ENCODE measurements at regions of chr9 and their contacts with region 1.

Region 1: GRCh38 chr9:27561685-27562084 is 11.6 kb downstream of the C9orf72 start:
- DNase-seq: no peak
- H3K4me3 ChIP-seq: no peak overlapping the region
- H3K27ac ChIP-seq: no peak overlapping the region
- H3K4me1 ChIP-seq: no peaks in the 10 kb centered on the region; a peak in 1 of 4 replicates
- H3K27me3 ChIP-seq: no peaks in the 10 kb centered on the region
- CTCF ChIP-seq: no peak
- EP300 ChIP-seq: no peak
- RAD21 ChIP-seq: no peak

Region 2: DNA sequence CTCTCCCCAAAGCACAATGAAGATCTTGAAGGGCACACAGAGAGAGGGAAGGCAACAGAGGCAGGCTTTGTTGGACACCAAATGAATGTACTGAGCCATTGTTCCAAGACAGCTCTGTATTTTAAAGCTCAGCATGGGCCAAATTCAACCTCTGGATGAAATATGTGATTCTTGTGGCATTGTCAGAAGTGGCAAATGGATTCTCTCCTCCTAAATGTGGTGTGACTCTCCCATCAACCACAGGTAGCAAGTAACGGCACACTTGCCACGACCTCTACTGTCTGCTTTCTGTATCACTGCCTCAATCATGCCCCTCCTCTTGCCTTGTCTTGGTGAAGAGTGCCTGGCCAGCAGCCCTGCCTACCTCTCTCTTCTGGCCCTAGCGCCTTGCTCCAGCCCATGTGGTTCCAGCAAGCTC is 26.0 kb before region 1 on chr9:
- CTCF ChIA-PET with region 1: no interaction called
- POLR2A ChIA-PET with region 1: no interaction called
- DNase-seq: no peak
- H3K4me3 ChIP-seq: no peak overlapping the region
- H3K27ac ChIP-seq: no peak overlapping the region
- H3K4me1 ChIP-seq: no peaks in the 10 kb centered on the region; a peak in 1 of 4 replicates
- H3K27me3 ChIP-seq: no peaks in the 10 kb centered on the region
- CTCF ChIP-seq: no peak
- EP300 ChIP-seq: no peak
- RAD21 ChIP-seq: no peak

Region 3: GRCh38 chr9:27548055-27548741 is 13.5 kb before region 1 on chr9:
- CTCF ChIA-PET with region 1: interaction called, 18 read pairs
- POLR2A ChIA-PET with region 1: no interaction called
- DNase-seq: peak; percentile 38
- H3K4me3 ChIP-seq: no peak overlapping the region
- H3K27ac ChIP-seq: peak overlapping the region in 1 of 2 experiments; percentile 39; a peak in 1 of 4 replicates
- H3K4me1 ChIP-seq: no peaks in the 10 kb centered on the region; a peak in 1 of 4 replicates
- H3K27me3 ChIP-seq: no peaks in the 10 kb centered on the region
- CTCF ChIP-seq: peak; percentile 67
- EP300 ChIP-seq: no peak
- RAD21 ChIP-seq: peak; percentile 80